Endothelial cell of umbilical vein (primary cell): ENCODE measurements at regions of chr7 and their contacts with region 1.

Region 1: GRCh38 chr7:46603780-46604179 is 682.7 kb upstream of the IGFBP3 start:
- DNase-seq: peak; percentile 89
- H3K4me3 ChIP-seq: no peak overlapping the region
- H3K27ac ChIP-seq: peak overlapping the region; percentile 9
- H3K4me1 ChIP-seq: peaks cover 8% of the 10 kb centered on the region
- H3K27me3 ChIP-seq: no peaks in the 10 kb centered on the region
- CTCF ChIP-seq: no peak
- POLR2A ChIP-seq: no peak

Region 2: DNA sequence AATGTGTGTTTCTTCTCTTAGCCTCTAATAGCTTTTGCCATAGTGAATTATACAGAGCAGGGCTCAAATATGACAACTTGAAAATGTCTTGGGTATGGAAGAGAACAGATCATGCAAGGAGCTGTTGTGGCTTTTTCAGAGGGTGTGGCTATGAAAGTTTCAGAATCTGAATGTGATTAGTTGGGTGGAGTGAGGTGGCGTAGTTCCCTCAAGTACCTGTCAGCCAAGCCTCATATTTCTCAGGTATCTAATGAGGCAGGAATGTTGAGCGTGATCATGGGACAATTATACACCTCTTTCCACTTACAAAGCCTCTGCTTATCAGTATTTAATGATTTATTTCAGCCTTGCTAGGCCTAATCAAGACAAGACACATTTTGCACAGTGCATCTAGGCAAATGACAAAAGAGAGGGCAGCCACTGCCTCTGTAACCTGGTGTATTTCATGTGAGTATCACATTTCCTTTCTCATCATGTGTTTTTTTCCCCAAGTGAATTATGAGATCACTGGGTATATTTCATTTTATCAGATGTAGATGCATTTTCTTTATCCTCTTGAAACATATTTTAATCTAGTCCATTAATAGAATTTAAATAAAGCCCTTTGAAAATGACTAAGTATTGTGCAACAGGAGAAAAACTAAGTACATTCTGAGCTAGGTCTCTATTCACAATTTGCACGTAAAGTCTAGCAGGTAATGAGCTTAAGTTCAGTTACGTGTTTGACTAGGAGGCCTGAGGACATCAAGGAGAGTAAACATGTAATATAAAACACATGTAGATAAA is 38.3 kb before region 1 on chr7:
- CTCF ChIA-PET with region 1: no interaction called
- POLR2A ChIA-PET with region 1: no interaction called
- dilution Hi-C with region 1: no loop called
- intact Hi-C with region 1: loop called (anchors 1 kb)
- DNase-seq: no peak
- H3K4me3 ChIP-seq: no peak overlapping the region
- H3K27ac ChIP-seq: no peak overlapping the region
- H3K4me1 ChIP-seq: peaks cover 13% of the 10 kb centered on the region
- H3K27me3 ChIP-seq: no peaks in the 10 kb centered on the region
- CTCF ChIP-seq: no peak
- POLR2A ChIP-seq: no peak